B cell (primary cell): ENCODE measurements at regions of chr6 and their contacts with region 1.

Region 1: DNA sequence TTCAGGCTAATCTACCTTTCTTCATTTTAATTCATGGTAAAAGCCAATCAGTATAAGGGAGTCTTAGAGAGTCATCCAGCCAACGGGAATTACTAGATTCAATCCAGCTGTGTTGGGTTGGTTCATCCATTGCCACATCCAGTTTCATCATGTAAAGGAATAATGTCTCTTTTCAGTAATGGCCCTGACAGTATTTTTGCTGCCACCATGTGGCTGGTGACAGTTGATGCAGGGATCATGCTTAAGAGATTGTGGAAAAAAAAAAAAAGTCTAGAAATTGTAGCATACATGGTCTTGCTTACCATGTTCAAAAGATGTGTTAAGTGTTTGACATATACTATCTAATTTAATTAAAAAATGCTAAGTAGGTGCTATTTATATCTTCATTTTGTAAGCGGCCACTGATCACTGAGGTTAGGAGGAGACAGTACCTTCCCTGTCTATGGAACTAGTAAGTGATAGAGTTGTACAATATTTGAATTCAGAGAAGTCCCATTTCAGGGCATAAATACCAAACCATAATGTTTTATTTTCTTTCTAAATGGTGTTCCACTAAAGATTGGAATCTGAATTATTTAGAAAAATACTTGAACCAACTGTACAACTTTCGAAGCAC is 135.9 kb downstream of the KHDRBS2 start:
- DNase-seq: peak; percentile 57
- ATAC-seq: peak; percentile 58
- H3K4me3 ChIP-seq: no peak overlapping the region
- H3K4me3 Mint-ChIP-seq: no peak overlapping the region
- H3K27ac ChIP-seq: no peak overlapping the region
- H3K27ac Mint-ChIP-seq: no peak overlapping the region
- H3K4me1 ChIP-seq: no peaks in the 10 kb centered on the region
- H3K4me1 Mint-ChIP-seq: no peaks in the 10 kb centered on the region
- H3K27me3 ChIP-seq: no peaks in the 10 kb centered on the region
- H3K27me3 Mint-ChIP-seq: no peaks in the 10 kb centered on the region
- CTCF ChIP-seq: peak; percentile 85

Region 2: DNA sequence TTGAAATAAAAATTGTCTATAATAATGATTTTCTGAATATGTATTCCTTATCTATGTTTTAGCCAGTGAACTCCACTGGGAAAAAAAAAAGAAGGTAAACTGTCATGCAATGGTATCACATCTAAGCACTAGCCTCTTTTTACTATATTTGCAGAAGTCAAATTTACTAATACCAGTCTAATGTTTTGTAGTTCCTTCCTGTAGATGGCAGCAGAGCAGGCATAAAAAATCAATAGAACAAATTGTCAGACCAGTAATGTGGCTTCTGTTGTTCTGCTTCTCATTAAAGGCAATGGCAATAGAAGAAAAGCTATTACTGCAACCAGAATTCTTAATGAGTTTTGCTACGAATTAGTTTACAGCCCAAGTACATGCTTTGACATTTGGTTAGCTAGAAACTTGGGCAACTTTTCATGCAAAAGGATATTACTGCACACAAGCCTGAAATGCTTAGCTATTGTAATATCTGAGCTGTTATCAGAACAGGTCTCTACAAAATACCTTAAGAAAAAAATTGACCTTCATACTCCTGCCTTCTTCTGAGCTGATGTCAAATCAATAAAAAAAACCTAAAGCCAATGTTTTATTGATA is 341.1 kb before region 1 on chr6:
- CTCF ChIA-PET with region 1: interaction called, 57 read pairs
- POLR2A ChIA-PET with region 1: no interaction called
- intact Hi-C with region 1: loop called (anchors 1 kb)
- DNase-seq: peak; percentile 60
- ATAC-seq: peak; percentile 33
- H3K4me3 ChIP-seq: no peak overlapping the region
- H3K4me3 Mint-ChIP-seq: no peak overlapping the region
- H3K27ac ChIP-seq: no peak overlapping the region
- H3K27ac Mint-ChIP-seq: no peak overlapping the region
- H3K4me1 ChIP-seq: no peaks in the 10 kb centered on the region
- H3K4me1 Mint-ChIP-seq: no peaks in the 10 kb centered on the region
- H3K27me3 ChIP-seq: no peaks in the 10 kb centered on the region
- H3K27me3 Mint-ChIP-seq: no peaks in the 10 kb centered on the region
- CTCF ChIP-seq: peak; percentile 72

Region 3: DNA sequence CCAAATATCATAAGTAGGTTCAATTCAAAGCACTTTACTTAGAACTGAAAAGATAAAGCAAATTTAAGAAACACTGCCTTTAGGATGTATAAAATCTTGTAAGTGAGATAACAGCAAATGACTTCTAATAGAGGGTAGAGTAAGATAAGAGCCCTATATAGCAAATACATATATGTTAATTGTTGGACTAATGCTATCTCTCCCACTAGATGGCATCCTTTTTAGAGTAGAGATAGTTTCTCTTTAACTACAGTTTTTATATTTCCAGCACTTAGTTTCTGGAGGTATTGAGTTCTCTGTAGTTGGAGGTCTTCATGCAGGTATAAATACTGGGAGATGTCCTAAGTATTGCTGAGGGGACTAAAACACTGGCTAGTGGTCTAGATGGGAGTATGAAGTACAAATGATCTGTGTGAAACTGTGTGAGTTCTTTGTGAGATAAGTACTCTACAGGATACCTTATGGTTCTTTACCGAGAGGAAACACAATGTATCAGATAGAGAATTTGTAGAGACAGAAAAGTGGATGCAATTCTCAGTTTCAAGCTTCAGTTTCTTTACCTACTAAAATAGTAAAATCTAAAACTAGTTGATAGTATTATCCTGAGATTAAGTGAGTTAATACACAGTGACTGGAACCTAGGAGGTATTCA is 263.4 kb before region 1 on chr6:
- CTCF ChIA-PET with region 1: interaction called, 20 read pairs
- POLR2A ChIA-PET with region 1: no interaction called
- intact Hi-C with region 1: loop called (anchors 1 kb)
- DNase-seq: peak; percentile 37
- ATAC-seq: peak; percentile 47
- H3K4me3 ChIP-seq: no peak overlapping the region
- H3K4me3 Mint-ChIP-seq: no peak overlapping the region
- H3K27ac ChIP-seq: no peak overlapping the region
- H3K27ac Mint-ChIP-seq: no peak overlapping the region
- H3K4me1 ChIP-seq: no peaks in the 10 kb centered on the region
- H3K4me1 Mint-ChIP-seq: peaks cover 2% of the 10 kb centered on the region
- H3K27me3 ChIP-seq: no peaks in the 10 kb centered on the region
- H3K27me3 Mint-ChIP-seq: no peaks in the 10 kb centered on the region
- CTCF ChIP-seq: peak; percentile 37